AG04449 (cell line): ENCODE measurements at regions of chr7 and their contacts with region 1.

Region 1: GRCh38 chr7:131302876-131303707 is 24.6 kb upstream of the MKLN1 start:
- DNase-seq: no peak
- H3K4me3 ChIP-seq: no peak overlapping the region
- CTCF ChIP-seq: peak; percentile 53

Region 2: GRCh38 chr7:130683026-130683425 is 620.1 kb before region 1 on chr7:
- CTCF ChIA-PET with region 1: no interaction called
- POLR2A ChIA-PET with region 1: no interaction called
- DNase-seq: peak; percentile 2
- H3K4me3 ChIP-seq: no peak overlapping the region
- CTCF ChIP-seq: no peak

Region 3: DNA sequence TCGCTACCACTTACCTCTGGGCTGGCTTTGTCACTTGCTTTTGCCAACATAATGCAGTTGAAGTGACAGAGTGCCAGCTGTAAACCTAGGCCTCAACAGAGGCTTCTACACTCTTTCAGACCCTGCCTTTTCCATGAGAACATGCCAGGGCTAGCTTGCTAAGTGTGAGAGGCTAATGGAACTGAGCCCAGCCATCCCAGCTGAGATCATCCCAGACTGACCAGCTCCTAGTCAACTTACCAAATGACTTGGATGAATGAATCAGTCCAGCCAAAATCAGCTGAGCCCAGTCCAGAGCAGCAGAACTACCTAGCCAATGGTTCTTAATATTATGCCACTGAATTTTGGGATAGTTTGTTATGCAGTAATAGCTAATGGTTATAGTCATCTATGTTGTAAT is 10.1 kb before region 1 on chr7:
- CTCF ChIA-PET with region 1: interaction called, 19 read pairs
- POLR2A ChIA-PET with region 1: no interaction called
- DNase-seq: peak; percentile 21
- H3K4me3 ChIP-seq: no peak overlapping the region
- CTCF ChIP-seq: no peak